ENCODE measurements at regions of chr3 and their contacts with region 1.

Region 1: DNA sequence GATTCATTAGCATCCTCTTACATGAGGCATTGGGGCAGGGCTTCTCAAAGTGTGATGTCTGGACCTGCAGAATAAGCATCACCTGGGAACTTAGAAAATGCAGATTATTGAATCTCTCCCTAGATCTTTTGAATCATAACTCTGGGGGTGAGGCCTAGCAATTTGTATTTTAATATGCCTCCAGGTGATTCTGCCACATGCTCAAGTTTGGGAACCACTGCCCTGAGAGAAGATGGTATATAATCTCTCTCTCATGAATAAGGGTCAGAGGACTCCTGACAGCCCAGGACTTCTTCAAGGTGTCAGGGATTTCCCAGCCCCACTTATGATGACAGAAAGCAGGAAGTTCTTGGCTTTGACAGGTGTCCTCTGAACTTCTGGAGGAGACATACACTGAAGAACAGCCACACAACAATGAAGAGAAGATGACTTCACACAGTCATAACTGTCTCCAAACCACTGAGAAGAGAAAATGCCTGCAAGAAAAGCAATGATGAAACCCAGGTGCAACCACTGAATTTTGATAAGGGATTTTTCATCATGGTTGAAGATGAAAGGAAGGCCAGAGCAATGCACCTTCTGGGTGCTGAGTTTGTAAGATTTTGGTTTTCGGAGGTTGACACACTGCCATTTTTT is 211.9 kb upstream of the MRPL3 start:
- DNase-seq: no peak
- H3K4me3 Mint-ChIP-seq: no peak overlapping the region
- H3K27ac Mint-ChIP-seq: no peak overlapping the region
- H3K4me1 Mint-ChIP-seq: peaks cover 9% of the 10 kb centered on the region
- H3K27me3 Mint-ChIP-seq: no peaks in the 10 kb centered on the region

Region 2: GRCh38 chr3:131561511-131561910 is 153.2 kb before region 1 on chr3:
- intact Hi-C with region 1: loop called (anchors 5 kb)
- DNase-seq: no peak
- H3K4me3 Mint-ChIP-seq: no peak overlapping the region
- H3K27ac Mint-ChIP-seq: no peak overlapping the region
- H3K4me1 Mint-ChIP-seq: no peaks in the 10 kb centered on the region
- H3K27me3 Mint-ChIP-seq: peaks cover 31% of the 10 kb centered on the region

Region 3: GRCh38 chr3:131730600-131730999 is 15.9 kb after region 1 on chr3:
- intact Hi-C with region 1: loop called (anchors 2 kb)
- DNase-seq: no peak
- H3K4me3 Mint-ChIP-seq: no peak overlapping the region
- H3K27ac Mint-ChIP-seq: no peak overlapping the region
- H3K4me1 Mint-ChIP-seq: peaks cover 23% of the 10 kb centered on the region
- H3K27me3 Mint-ChIP-seq: no peaks in the 10 kb centered on the region

Measured in activated T-helper 1 cell treated with anti-CD3 and anti-CD28 coated beads, Interleukin-12 subunit alpha, Interleukin-12 subunit beta, Interleukin-2, Interleukin-4 antibody, amounts not matched to agents 30 ng/mL and 10 ng/mL and 1 ng/mL, durations not matched to agents 14 hours and 24 hours and 36 hours (primary cell).